ENCODE measurements at regions of chr3 and their contacts with region 1.

Region 1: DNA sequence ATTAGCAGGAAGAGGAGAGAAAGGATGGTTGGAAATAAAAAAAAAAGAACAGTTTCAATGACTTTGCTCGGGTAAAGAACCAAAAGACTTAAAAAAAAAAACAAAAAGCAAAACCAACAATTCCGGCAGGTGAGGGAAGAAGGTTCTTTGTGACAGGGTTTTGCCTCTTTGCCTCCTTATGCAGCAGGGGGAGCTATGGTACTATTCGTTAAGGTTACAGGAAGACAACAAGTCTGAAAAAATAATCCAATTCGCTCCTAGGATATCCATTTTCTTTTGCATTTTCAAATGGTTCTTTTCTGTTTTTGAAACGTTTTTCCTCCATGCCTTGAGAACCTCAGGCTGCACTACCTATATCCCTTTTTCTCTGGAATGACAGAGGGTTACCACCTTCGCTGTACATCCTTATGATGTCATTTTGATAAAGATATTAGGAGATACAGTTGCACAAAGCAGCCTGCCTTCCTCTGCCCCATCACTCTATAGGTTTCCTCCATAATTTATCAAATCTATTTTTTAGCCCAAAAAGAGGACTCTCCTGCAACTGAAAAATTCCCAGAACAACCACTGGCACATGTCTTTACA is 55.0 kb downstream of the CFAP20DC start:
- DNase-seq: peak; percentile 69
- H3K4me3 Mint-ChIP-seq: no peak overlapping the region
- H3K27ac Mint-ChIP-seq: peak overlapping the region; percentile 75
- H3K4me1 Mint-ChIP-seq: peaks cover 33% of the 10 kb centered on the region
- H3K27me3 Mint-ChIP-seq: no peaks in the 10 kb centered on the region
- CTCF ChIP-seq: peak; percentile 42

Region 2: DNA sequence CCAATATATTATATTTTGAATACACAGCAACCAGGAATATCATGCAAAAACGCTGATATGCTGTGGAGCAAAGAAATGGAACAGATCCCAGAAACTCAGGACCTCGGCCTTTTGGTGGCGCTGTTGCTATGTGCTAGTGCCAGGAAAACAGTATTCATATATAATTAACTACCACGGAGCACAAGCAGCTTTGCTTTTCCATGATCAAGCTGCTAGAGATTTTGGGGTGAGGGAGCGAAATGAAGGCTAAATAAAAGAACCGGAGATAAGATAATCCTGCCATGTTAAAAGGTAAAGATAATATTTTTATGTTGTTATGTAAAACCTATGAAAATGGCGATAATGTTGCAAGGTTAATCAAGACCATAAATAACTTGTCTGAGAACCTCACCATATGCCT is 170.6 kb before region 1 on chr3:
- CTCF ChIA-PET with region 1: interaction called, 6 read pairs
- intact Hi-C with region 1: loop called (anchors 10 kb)
- DNase-seq: peak; percentile 70
- H3K4me3 Mint-ChIP-seq: no peak overlapping the region
- H3K27ac Mint-ChIP-seq: no peak overlapping the region
- H3K4me1 Mint-ChIP-seq: peaks cover 11% of the 10 kb centered on the region
- H3K27me3 Mint-ChIP-seq: no peaks in the 10 kb centered on the region
- CTCF ChIP-seq: peak; percentile 46

Region 3: GRCh38 chr3:59049671-59050331 is 55.0 kb after region 1 on chr3 and contains the start of gene CFAP20DC:
- CTCF ChIA-PET with region 1: interaction called, 12 read pairs
- intact Hi-C with region 1: loop called (anchors 1 kb)
- DNase-seq: peak; percentile 94
- H3K4me3 Mint-ChIP-seq: peak within 1 kb of the TSS; percentile 71
- H3K27ac Mint-ChIP-seq: peak within 1 kb of the TSS; percentile 79
- H3K4me1 Mint-ChIP-seq: peaks cover 30% of the 10 kb centered on the region
- H3K27me3 Mint-ChIP-seq: no peaks in the 10 kb centered on the region
- CTCF ChIP-seq: no peak
- total RNA-seq, gene CFAP20DC: 5.8 and 5.9 TPM in 2 replicates

Region 4: DNA sequence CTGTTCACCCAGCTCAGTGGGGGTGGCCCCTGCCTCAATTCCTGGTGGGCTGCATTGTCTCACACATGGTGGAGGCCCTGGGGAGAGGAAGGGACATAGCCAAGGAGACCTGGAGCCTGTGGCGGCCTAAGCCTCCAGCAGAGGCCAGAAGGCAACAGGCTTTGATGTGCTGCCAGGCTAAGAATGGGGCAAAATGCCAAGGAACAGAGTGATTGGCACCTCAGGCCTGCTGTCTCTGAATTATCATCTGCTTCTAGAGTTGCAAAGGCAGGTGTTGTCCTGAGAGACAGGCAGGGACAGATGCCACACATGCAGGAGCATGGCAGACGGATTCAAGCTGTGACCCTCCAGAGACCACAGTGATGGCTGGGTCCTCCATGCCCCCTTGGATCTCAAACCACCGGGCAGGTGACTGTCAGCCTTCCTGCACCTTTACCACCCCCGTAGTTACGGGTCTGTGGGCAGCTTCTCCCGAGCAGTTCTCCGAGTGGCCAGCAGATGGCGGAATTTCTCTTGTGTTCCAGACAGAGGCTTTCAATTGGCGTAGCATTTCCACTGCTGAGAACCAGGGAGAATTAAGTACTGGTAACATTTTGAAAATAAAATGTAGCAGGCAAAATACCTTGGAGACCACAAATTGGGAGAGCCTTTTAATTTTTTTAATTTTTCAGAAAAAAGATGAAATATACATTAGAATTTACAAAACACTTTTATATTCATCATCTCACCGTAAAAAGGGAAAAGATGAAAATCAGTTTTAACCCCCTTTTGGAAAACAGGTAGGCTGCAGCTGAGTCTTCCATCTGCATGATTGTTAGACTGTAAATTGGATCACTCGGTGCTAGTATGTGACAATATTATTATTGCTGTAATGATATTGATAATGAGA is 580.5 kb after region 1 on chr3:
- CTCF ChIA-PET with region 1: no interaction called
- intact Hi-C with region 1: loop called (anchors 10 kb)
- DNase-seq: peak; percentile 80
- H3K4me3 Mint-ChIP-seq: no peak overlapping the region
- H3K27ac Mint-ChIP-seq: no peak overlapping the region
- H3K4me1 Mint-ChIP-seq: no peaks in the 10 kb centered on the region
- H3K27me3 Mint-ChIP-seq: peaks cover 8% of the 10 kb centered on the region
- CTCF ChIP-seq: peak; percentile 80

Region 5: GRCh38 chr3:60269377-60269776 is 1274.5 kb after region 1 on chr3:
- CTCF ChIA-PET with region 1: no interaction called
- intact Hi-C with region 1: no loop called
- DNase-seq: no peak
- H3K4me3 Mint-ChIP-seq: no peak overlapping the region
- H3K27ac Mint-ChIP-seq: no peak overlapping the region
- H3K4me1 Mint-ChIP-seq: no peaks in the 10 kb centered on the region
- H3K27me3 Mint-ChIP-seq: no peaks in the 10 kb centered on the region
- CTCF ChIP-seq: no peak

Measured in Calu3 (cell line).